ENCODE measurements at regions of chr19 and their contacts with region 1.

Region 1: DNA sequence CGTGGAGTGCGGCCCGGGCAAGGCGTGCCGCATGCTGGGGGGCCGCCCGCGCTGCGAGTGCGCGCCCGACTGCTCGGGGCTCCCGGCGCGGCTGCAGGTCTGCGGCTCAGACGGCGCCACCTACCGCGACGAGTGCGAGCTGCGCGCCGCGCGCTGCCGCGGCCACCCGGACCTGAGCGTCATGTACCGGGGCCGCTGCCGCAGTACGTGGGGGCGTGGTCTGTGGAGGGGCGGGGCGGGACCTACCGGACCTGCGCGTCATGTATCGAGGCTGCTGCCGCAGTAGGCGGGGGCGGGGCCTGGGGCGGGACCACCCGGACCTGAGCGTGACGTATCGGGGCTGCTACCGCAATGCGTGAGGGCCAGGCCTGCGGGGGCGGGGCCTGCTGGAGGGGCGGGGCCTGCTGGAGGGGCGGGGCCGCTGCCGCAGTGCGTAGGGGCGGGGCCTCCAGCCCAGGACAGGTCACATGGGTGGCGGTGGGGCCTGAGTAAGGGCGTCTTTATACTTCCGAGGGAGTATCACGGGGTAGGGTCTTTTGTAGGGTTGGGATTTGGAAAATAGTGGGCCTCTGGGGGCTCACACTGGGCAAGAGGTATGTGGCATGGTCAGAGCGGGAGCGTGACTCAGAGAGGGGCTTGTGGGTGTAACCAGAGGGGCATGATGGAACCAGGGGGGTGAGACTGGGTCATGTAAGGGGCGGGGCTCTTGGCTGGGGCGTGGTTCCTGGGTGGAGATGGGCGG is 4.3 kb downstream of the FSTL3 start:
- DNase-seq: peak; percentile 100
- ATAC-seq: peak; percentile 81
- H3K4me3 Mint-ChIP-seq: peak overlapping the region; percentile 70
- H3K27ac Mint-ChIP-seq: peak overlapping the region; percentile 94
- H3K4me1 Mint-ChIP-seq: peaks cover 3% of the 10 kb centered on the region
- H3K27me3 Mint-ChIP-seq: peaks cover 4% of the 10 kb centered on the region

Region 2: GRCh38 chr19:531009-531752 is 149.3 kb before region 1 on chr19:
- CTCF ChIA-PET with region 1: no interaction called
- POLR2A ChIA-PET with region 1: no interaction called
- intact Hi-C with region 1: loop called in 1 of 2 experiments (anchors 1 kb)
- DNase-seq: peak; percentile 93
- ATAC-seq: peak; percentile 78
- H3K4me3 Mint-ChIP-seq: peak overlapping the region; percentile 77
- H3K27ac Mint-ChIP-seq: peak overlapping the region; percentile 84
- H3K4me1 Mint-ChIP-seq: peaks cover 24% of the 10 kb centered on the region
- H3K27me3 Mint-ChIP-seq: peaks cover 1% of the 10 kb centered on the region

Region 3: DNA sequence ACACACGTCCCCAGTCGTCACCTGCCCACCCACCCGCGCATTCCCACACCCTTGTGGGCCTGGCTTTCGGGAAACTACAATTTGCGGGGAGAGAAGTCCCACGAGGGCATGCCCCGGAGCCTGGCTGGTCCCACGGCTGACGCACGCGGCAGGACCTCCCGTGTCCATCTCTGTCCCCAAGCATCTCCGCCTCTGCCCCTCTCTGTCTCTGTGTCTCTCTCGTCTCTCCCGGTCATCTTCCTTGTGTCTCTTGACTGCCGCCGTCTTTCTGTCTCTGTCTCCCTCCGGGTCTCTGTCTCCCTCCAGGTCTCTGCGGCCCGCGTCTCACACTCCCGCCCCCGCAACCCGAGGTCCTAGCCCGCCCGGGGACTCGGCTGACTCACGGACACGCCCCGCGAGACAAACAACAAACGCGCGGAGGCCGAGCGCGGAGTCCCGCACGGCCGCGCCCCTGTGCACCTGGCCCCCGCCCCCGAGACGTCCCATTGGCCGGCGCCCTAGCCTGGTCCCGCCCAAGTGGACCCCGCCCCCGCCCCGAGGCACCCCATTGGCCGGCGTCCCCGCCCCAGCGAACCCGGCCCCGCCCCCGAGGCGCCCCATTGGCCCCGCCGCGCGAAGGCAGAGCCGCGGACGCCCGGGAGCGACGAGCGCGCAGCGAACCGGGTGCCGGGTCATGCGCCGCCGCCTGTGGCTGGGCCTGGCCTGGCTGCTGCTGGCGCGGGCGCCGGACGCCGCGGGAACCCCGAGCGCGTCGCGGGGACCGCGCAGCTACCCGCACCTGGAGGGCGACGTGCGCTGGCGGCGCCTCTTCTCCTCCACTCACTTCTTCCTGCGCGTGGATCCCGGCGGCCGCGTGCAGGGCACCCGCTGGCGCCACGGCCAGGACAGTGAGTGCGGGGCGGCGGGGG is 41.0 kb before region 1 on chr19 and contains the start of gene FGF22:
- CTCF ChIA-PET with region 1: interaction called, 3 read pairs
- POLR2A ChIA-PET with region 1: no interaction called
- intact Hi-C with region 1: loop called in 1 of 2 experiments (anchors 1 kb)
- DNase-seq: peak; percentile 98
- ATAC-seq: peak; percentile 97
- H3K4me3 Mint-ChIP-seq: peak within 1 kb of the TSS; percentile 70
- H3K27ac Mint-ChIP-seq: peak within 1 kb of the TSS; percentile 64
- H3K4me1 Mint-ChIP-seq: peaks cover 6% of the 10 kb centered on the region
- H3K27me3 Mint-ChIP-seq: peaks cover 2% of the 10 kb centered on the region
- total RNA-seq, gene FGF22: not detected

Region 4: GRCh38 chr19:860481-861101 is 180.1 kb after region 1 on chr19:
- CTCF ChIA-PET with region 1: no interaction called
- POLR2A ChIA-PET with region 1: no interaction called
- intact Hi-C with region 1: loop called in 1 of 2 experiments (anchors 1 kb)
- DNase-seq: peak; percentile 73
- ATAC-seq: peak; percentile 17
- H3K4me3 Mint-ChIP-seq: no peak overlapping the region
- H3K27ac Mint-ChIP-seq: no peak overlapping the region
- H3K4me1 Mint-ChIP-seq: peaks cover 13% of the 10 kb centered on the region
- H3K27me3 Mint-ChIP-seq: peaks cover 13% of the 10 kb centered on the region

Region 5: DNA sequence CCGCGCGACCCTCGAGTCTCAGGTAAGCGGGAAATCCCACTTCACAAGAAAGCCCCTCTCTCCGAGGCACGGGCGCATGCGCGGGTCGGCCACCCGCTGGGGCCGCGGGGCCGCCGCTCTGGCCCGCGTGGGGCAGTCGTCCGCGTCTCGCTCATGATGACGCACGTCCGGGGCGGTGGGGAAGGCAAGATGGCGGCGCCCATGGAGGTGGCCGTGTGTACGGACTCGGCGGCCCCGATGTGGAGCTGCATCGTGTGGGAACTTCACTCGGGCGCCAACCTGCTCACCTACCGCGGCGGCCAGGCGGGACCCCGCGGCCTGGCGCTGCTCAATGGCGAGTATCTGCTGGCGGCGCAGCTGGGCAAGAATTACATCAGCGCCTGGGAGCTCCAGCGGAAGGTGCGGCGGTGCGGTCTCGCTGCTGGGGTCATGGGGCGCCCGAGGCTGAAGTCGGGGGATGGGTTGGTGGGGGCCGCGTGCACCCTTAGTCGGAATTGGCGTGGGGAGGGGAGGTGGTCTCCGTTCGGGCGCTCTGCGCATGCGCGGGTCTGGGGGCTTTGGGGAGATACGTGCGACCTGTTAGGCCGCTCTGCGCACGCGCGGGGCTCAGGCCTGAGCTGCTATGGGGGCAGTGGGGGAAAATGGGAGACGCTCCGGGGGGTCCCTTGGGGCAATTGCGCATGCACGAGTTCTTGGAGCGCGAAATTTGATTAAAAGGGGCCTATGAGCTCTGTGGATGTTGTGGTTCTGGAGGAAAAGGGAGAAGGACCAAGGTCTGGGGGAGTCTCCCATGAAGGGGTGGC is 303.9 kb after region 1 on chr19 and contains the start of gene WDR18:
- CTCF ChIA-PET with region 1: no interaction called
- POLR2A ChIA-PET with region 1: no interaction called
- intact Hi-C with region 1: loop called in 1 of 2 experiments (anchors 1 kb)
- DNase-seq: peak; percentile 95
- ATAC-seq: peak; percentile 92
- H3K4me3 Mint-ChIP-seq: peak within 1 kb of the TSS; percentile 91
- H3K27ac Mint-ChIP-seq: peak within 1 kb of the TSS; percentile 86
- H3K4me1 Mint-ChIP-seq: peaks cover 14% of the 10 kb centered on the region
- H3K27me3 Mint-ChIP-seq: no peaks in the 10 kb centered on the region
- total RNA-seq, gene WDR18: 71.6 to 87.8 TPM

Region 6: GRCh38 chr19:1205114-1206062 is 524.9 kb after region 1 on chr19 and contains the start of gene STK11:
- CTCF ChIA-PET with region 1: no interaction called
- POLR2A ChIA-PET with region 1: no interaction called
- intact Hi-C with region 1: loop called in 1 of 2 experiments (anchors 1 kb)
- DNase-seq: peak; percentile 100
- ATAC-seq: peak; percentile 97
- H3K4me3 Mint-ChIP-seq: peak within 1 kb of the TSS; percentile 93
- H3K27ac Mint-ChIP-seq: peak within 1 kb of the TSS; percentile 77
- H3K4me1 Mint-ChIP-seq: peaks cover 23% of the 10 kb centered on the region
- H3K27me3 Mint-ChIP-seq: no peaks in the 10 kb centered on the region
- total RNA-seq, gene STK11: 49.2 to 61.5 TPM

Region 7: DNA sequence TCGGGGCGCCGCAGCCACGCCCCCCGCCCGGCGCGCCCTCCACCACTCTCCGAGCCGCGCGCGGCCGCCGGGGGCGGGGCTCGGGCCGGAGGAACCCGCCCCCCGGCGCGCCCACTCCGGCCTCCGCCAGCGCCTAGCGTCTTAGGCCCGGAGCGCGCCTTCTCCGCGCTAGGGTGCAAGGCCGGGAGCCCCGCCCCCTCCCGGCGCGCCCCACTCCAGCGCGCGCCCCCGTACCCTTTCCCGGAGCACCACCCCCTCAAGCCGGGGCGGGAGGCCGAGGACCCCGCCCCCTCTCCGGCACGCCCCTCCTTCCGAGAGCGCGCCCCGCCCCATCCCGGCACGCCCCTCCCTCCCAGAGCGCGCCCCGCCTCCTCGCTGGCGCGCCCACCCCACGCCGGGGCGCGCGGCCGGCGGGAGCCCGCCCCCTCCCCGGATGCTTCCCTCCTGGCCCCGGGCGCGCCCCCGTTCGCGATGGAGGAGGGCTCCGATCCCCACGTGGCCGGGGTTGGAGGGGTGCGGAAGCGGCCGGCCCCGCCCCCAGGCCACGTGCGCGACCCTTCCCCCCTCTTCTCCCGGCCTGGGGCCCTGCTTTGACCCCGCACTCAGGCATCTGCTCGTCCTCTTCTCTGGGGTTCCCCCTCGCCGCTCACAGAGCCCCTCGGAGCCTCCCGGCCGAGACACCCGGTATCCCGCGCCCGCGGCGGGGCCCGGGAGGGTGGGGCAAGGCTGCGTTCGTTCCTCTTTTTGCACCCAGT is 1183.4 kb after region 1 on chr19:
- CTCF ChIA-PET with region 1: no interaction called
- POLR2A ChIA-PET with region 1: no interaction called
- intact Hi-C with region 1: loop called in 1 of 2 experiments (anchors 2 kb)
- DNase-seq: peak; percentile 97
- ATAC-seq: peak; percentile 75
- H3K4me3 Mint-ChIP-seq: peak overlapping the region; percentile 68
- H3K27ac Mint-ChIP-seq: peak overlapping the region; percentile 72
- H3K4me1 Mint-ChIP-seq: peaks cover 37% of the 10 kb centered on the region
- H3K27me3 Mint-ChIP-seq: no peaks in the 10 kb centered on the region